ENCODE measurements at regions of chr12 and their contacts with region 1.

Region 1: GRCh38 chr12:55973598-55974307 is at the start of gene RAB5B:
- DNase-seq: peak; percentile 99
- ATAC-seq: peak; percentile 87
- H3K4me3 ChIP-seq: peak within 1 kb of the TSS; percentile 77 to 99 (median 90)
- H3K4me3 Mint-ChIP-seq: no peak within 1 kb of the TSS
- H3K27ac ChIP-seq: peak within 1 kb of the TSS; percentile 85 to 96
- H3K27ac Mint-ChIP-seq: no peak within 1 kb of the TSS
- H3K4me1 ChIP-seq: peaks cover 17% of the 10 kb centered on the region in 2 donors
- H3K4me1 Mint-ChIP-seq: peaks cover 13% of the 10 kb centered on the region
- H3K27me3 ChIP-seq: no peaks in the 10 kb centered on the region
- H3K27me3 Mint-ChIP-seq: no peaks in the 10 kb centered on the region
- CTCF ChIP-seq: no peak
- total RNA-seq, gene RAB5B: 96.1 and 111 TPM in 2 replicates

Region 2: GRCh38 chr12:54840317-54840771 is 1133.4 kb before region 1 on chr12:
- CTCF ChIA-PET with region 1: no interaction called
- POLR2A ChIA-PET with region 1: no interaction called
- intact Hi-C with region 1: no loop called
- DNase-seq: no peak
- ATAC-seq: no peak
- H3K4me3 ChIP-seq: no peak overlapping the region
- H3K4me3 Mint-ChIP-seq: no peak overlapping the region
- H3K27ac ChIP-seq: no peak overlapping the region
- H3K27ac Mint-ChIP-seq: no peak overlapping the region
- H3K4me1 ChIP-seq: no peaks in the 10 kb centered on the region
- H3K4me1 Mint-ChIP-seq: no peaks in the 10 kb centered on the region
- H3K27me3 ChIP-seq: peaks cover 0 to 17% (median 0%) of the 10 kb centered on the region in 4 experiments
- H3K27me3 Mint-ChIP-seq: peaks cover 30% of the 10 kb centered on the region
- CTCF ChIP-seq: no peak

Region 3: GRCh38 chr12:55757701-55758100 is 216.1 kb before region 1 on chr12:
- CTCF ChIA-PET with region 1: no interaction called
- POLR2A ChIA-PET with region 1: no interaction called
- intact Hi-C with region 1: no loop called
- DNase-seq: no peak
- ATAC-seq: no peak
- H3K4me3 ChIP-seq: no peak overlapping the region
- H3K4me3 Mint-ChIP-seq: no peak overlapping the region
- H3K27ac ChIP-seq: no peak overlapping the region
- H3K27ac Mint-ChIP-seq: no peak overlapping the region
- H3K4me1 ChIP-seq: no peaks in the 10 kb centered on the region
- H3K4me1 Mint-ChIP-seq: no peaks in the 10 kb centered on the region
- H3K27me3 ChIP-seq: no peaks in the 10 kb centered on the region
- H3K27me3 Mint-ChIP-seq: no peaks in the 10 kb centered on the region
- CTCF ChIP-seq: no peak

Region 4: GRCh38 chr12:55817346-55818139 is 156.2 kb before region 1 on chr12 and contains the starts of genes ORMDL2 and SARNP:
- CTCF ChIA-PET with region 1: no interaction called
- POLR2A ChIA-PET with region 1: interaction called, 11 read pairs
- intact Hi-C with region 1: loop called (anchors 1 kb)
- DNase-seq: peak; percentile 99
- ATAC-seq: peak; percentile 92
- H3K4me3 ChIP-seq: peak within 1 kb of the TSS; percentile 81 to 100 (median 94)
- H3K4me3 Mint-ChIP-seq: no peak within 1 kb of the TSS
- H3K27ac ChIP-seq: peak within 1 kb of the TSS; percentile 50 to 84
- H3K27ac Mint-ChIP-seq: no peak within 1 kb of the TSS
- H3K4me1 ChIP-seq: peaks cover 24 to 30% of the 10 kb centered on the region in 2 donors
- H3K4me1 Mint-ChIP-seq: peaks cover 30% of the 10 kb centered on the region
- H3K27me3 ChIP-seq: no peaks in the 10 kb centered on the region
- H3K27me3 Mint-ChIP-seq: no peaks in the 10 kb centered on the region
- CTCF ChIP-seq: no peak
- total RNA-seq, gene ORMDL2: 41.9 and 43.1 TPM in 2 replicates
- total RNA-seq, gene SARNP: 42.8 and 46.4 TPM in 2 replicates

Region 5: GRCh38 chr12:55908726-55909512 is 64.8 kb before region 1 on chr12:
- CTCF ChIA-PET with region 1: no interaction called
- POLR2A ChIA-PET with region 1: interaction called, 12 read pairs
- intact Hi-C with region 1: no loop called
- DNase-seq: no peak
- ATAC-seq: no peak
- H3K4me3 ChIP-seq: no peak overlapping the region
- H3K4me3 Mint-ChIP-seq: no peak overlapping the region
- H3K27ac ChIP-seq: peak overlapping the region in 1 of 2 donors; percentile 14
- H3K27ac Mint-ChIP-seq: no peak overlapping the region
- H3K4me1 ChIP-seq: no peaks in the 10 kb centered on the region
- H3K4me1 Mint-ChIP-seq: peaks cover 10% of the 10 kb centered on the region
- H3K27me3 ChIP-seq: no peaks in the 10 kb centered on the region
- H3K27me3 Mint-ChIP-seq: no peaks in the 10 kb centered on the region
- CTCF ChIP-seq: no peak

Region 6: DNA sequence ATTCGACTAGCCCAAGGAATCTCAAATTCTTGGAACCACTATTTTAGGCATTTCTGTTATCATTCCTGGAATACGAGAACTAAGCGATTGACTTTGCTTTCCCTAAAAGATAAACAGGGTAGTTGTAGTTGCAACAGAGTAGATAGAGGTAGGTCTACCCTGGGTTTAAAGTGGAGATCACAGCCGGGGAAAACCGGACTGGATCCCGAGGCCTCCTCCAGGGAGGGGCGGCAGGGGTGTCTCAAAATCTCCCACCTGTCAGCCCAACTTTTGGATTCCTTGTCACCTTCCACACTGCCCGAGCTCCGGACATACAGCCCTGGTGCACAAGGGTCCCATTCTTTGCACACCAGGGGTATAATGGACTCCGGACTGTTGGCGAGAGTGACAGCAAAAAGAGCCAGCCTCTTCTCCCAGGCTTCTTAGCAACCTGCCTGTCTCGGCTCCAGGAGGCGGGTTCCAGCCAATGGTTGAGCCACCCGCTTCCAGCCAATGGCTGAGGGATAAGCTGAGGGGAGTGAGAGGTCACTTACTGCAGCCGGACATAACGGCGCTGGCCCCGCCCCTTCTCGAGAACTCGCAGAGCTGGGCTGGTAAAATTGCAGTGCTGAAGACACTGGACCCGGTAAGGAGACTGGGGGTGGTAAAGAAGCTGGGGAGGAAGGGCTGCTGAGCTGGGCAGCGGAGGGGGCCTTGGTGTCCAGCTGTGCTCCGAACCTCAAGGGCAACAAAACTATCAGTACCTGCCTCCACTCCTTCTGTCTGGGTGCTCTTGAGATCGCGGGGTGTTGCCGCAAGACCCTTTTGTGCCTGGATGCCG is 23.2 kb after region 1 on chr12 and contains the start of gene SUOX:
- CTCF ChIA-PET with region 1: interaction called, 33 read pairs
- POLR2A ChIA-PET with region 1: interaction called, 9 read pairs
- intact Hi-C with region 1: loop called (anchors 1 kb)
- DNase-seq: peak; percentile 46
- ATAC-seq: peak; percentile 74
- H3K4me3 ChIP-seq: peak within 1 kb of the TSS; percentile 32 to 48 (median 41)
- H3K4me3 Mint-ChIP-seq: peak within 1 kb of the TSS; percentile 84
- H3K27ac ChIP-seq: no peak within 1 kb of the TSS
- H3K27ac Mint-ChIP-seq: peak within 1 kb of the TSS; percentile 71
- H3K4me1 ChIP-seq: peaks cover 13 to 18% of the 10 kb centered on the region in 2 donors
- H3K4me1 Mint-ChIP-seq: peaks cover 21% of the 10 kb centered on the region
- H3K27me3 ChIP-seq: peaks cover 0 to 4% (median 0%) of the 10 kb centered on the region in 4 experiments
- H3K27me3 Mint-ChIP-seq: no peaks in the 10 kb centered on the region
- CTCF ChIP-seq: no peak
- total RNA-seq, gene SUOX: 6.3 and 7.5 TPM in 2 replicates

Region 7: DNA sequence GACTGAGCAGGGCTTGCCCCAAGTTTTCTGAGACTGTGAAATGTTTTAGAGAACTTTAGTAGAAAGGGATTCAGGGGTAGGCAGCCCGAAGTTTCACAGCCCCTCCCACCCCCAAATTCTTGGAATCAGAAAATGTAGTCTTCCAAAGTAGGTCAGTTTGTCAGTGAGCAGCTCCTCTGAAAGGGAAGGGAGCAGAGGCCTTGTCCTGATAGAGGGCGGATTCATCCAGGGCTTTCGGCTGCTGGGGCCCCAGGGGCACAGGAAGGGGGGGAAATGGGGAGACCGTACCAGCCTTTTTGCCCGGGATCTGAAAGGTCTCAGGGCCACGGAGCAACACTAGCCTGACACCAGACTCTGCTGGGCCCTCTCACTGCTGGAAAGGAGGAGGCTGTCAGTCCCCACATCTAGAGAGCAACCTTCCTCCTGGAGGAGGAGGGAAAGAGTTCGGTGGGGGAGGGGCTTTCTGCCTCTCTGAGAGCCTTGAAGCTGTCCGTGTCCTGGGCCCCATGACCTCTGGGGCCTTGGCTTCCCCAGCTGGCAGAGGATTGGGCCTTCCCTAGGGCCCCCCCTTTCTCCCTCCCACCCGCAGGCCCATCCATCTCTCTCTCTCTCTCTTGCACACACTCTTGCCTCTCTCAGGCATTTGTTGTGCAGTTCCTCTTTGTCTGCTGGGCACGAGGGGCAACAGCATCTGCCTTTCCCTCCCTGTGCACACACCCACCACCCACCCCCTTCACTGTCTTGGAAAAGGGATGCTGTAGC is 46.9 kb after region 1 on chr12 and contains the start of gene IKZF4:
- CTCF ChIA-PET with region 1: no interaction called
- POLR2A ChIA-PET with region 1: no interaction called
- intact Hi-C with region 1: no loop called
- DNase-seq: no peak
- ATAC-seq: peak; percentile 51
- H3K4me3 ChIP-seq: peak within 1 kb of the TSS in 4 of 5 experiments; percentile 14 to 47 (median 22)
- H3K4me3 Mint-ChIP-seq: peak within 1 kb of the TSS; percentile 82
- H3K27ac ChIP-seq: no peak within 1 kb of the TSS
- H3K27ac Mint-ChIP-seq: peak within 1 kb of the TSS; percentile 76
- H3K4me1 ChIP-seq: peaks cover 9 to 18% of the 10 kb centered on the region in 2 donors
- H3K4me1 Mint-ChIP-seq: peaks cover 11% of the 10 kb centered on the region
- H3K27me3 ChIP-seq: no peaks in the 10 kb centered on the region
- H3K27me3 Mint-ChIP-seq: no peaks in the 10 kb centered on the region
- CTCF ChIP-seq: no peak
- total RNA-seq, gene IKZF4: 7.6 and 8.9 TPM in 2 replicates

Region 8: GRCh38 chr12:56041552-56042429 is 68.0 kb after region 1 on chr12 and contains the start of gene RPS26:
- CTCF ChIA-PET with region 1: interaction called, 3 read pairs
- POLR2A ChIA-PET with region 1: interaction called, 3 read pairs
- intact Hi-C with region 1: loop called (anchors 1 kb)
- DNase-seq: peak; percentile 99
- ATAC-seq: peak; percentile 93
- H3K4me3 ChIP-seq: peak within 1 kb of the TSS; percentile 70 to 99 (median 91)
- H3K4me3 Mint-ChIP-seq: peak within 1 kb of the TSS; percentile 98
- H3K27ac ChIP-seq: peak within 1 kb of the TSS; percentile 82 to 90
- H3K27ac Mint-ChIP-seq: peak within 1 kb of the TSS; percentile 97
- H3K4me1 ChIP-seq: peaks cover 19 to 21% of the 10 kb centered on the region in 2 donors
- H3K4me1 Mint-ChIP-seq: peaks cover 24% of the 10 kb centered on the region
- H3K27me3 ChIP-seq: no peaks in the 10 kb centered on the region
- H3K27me3 Mint-ChIP-seq: no peaks in the 10 kb centered on the region
- CTCF ChIP-seq: peak; percentile 67
- total RNA-seq, gene RPS26: 19.4 and 21.0 TPM in 2 replicates

Region 9: DNA sequence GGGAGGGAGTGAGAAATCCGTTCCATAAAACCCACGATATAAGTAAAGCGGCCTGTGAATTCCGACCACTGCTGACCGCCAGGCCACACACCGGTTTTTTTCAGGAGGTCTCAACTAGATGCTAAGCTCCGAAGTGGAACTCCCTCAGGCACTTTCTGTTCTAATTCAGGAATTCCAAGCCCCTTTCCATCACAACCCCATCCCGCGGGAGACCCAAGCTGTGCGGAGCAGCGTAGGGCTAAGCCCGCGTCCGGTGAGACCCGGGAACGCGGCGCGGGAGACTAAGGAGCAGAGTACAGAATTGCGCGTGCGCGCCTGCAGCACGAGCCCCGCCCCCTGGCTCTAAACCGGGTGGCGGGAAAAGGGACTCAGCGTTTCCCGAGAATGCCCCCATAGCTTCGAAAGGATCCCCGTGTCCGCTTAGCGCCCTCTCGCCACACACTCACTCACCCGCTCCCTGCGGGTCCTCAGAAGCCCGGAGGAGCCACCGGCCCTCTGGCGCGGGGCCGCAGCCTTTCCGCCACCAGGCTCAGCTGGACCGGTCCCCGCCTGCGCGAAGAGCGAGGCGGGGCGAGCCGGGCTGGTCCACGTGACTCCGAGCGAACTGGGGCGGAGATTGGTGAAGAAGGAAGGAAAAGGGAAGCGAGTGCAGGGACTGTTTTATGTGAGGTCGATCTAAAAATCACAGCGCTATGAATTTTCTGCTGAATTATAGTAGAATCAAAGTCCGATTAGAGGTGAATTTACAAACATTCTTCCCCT is 475.3 kb after region 1 on chr12 and contains the start of gene TIMELESS:
- CTCF ChIA-PET with region 1: no interaction called
- POLR2A ChIA-PET with region 1: no interaction called
- intact Hi-C with region 1: loop called (anchors 1 kb)
- DNase-seq: peak; percentile 95
- ATAC-seq: peak; percentile 96
- H3K4me3 ChIP-seq: peak within 1 kb of the TSS; percentile 69 to 98 (median 83)
- H3K4me3 Mint-ChIP-seq: peak within 1 kb of the TSS; percentile 90
- H3K27ac ChIP-seq: peak within 1 kb of the TSS; percentile 53 to 85
- H3K27ac Mint-ChIP-seq: peak within 1 kb of the TSS; percentile 92
- H3K4me1 ChIP-seq: peaks cover 10 to 12% of the 10 kb centered on the region in 2 donors
- H3K4me1 Mint-ChIP-seq: peaks cover 23% of the 10 kb centered on the region
- H3K27me3 ChIP-seq: no peaks in the 10 kb centered on the region
- H3K27me3 Mint-ChIP-seq: no peaks in the 10 kb centered on the region
- CTCF ChIP-seq: no peak
- total RNA-seq, gene TIMELESS: 44.4 and 46.6 TPM in 2 replicates